CD14-positive monocyte (primary cell): ENCODE measurements at regions of chr17 and their contacts with region 1.

Region 1: GRCh38 chr17:36937966-36938565 is 791 bp downstream of the LHX1 start:
- DNase-seq: no peak
- H3K4me3 ChIP-seq: peak overlapping the region in 1 of 3 experiments; percentile 65
- H3K4me3 Mint-ChIP-seq: peak overlapping the region; percentile 69 to 89
- H3K27ac ChIP-seq: no peak overlapping the region
- H3K27ac Mint-ChIP-seq: no peak overlapping the region
- H3K4me1 ChIP-seq: peaks cover 62 to 73% of the 10 kb centered on the region in 2 donors
- H3K4me1 Mint-ChIP-seq: peaks cover 69% of the 10 kb centered on the region
- H3K27me3 ChIP-seq: peaks cover 92 to 99% of the 10 kb centered on the region in 2 donors
- H3K27me3 Mint-ChIP-seq: peaks cover 91 to 100% (median 99%) of the 10 kb centered on the region in 3 donors
- CTCF ChIP-seq: no peak

Region 2: GRCh38 chr17:35498448-35499178 is 1439.5 kb before region 1 on chr17:
- intact Hi-C with region 1: loop called in 1 of 2 experiments (anchors 10 kb)
- DNase-seq: no peak
- H3K4me3 ChIP-seq: peak overlapping the region in 1 of 3 experiments; percentile 41
- H3K4me3 Mint-ChIP-seq: peak overlapping the region in 1 of 2 donors; percentile 72
- H3K27ac ChIP-seq: no peak overlapping the region
- H3K27ac Mint-ChIP-seq: no peak overlapping the region
- H3K4me1 ChIP-seq: peaks cover 12 to 22% of the 10 kb centered on the region in 2 donors
- H3K4me1 Mint-ChIP-seq: peaks cover 30% of the 10 kb centered on the region
- H3K27me3 ChIP-seq: peaks cover 61 to 69% of the 10 kb centered on the region in 2 donors
- H3K27me3 Mint-ChIP-seq: peaks cover 76 to 87% (median 82%) of the 10 kb centered on the region in 3 donors
- CTCF ChIP-seq: no peak

Region 3: DNA sequence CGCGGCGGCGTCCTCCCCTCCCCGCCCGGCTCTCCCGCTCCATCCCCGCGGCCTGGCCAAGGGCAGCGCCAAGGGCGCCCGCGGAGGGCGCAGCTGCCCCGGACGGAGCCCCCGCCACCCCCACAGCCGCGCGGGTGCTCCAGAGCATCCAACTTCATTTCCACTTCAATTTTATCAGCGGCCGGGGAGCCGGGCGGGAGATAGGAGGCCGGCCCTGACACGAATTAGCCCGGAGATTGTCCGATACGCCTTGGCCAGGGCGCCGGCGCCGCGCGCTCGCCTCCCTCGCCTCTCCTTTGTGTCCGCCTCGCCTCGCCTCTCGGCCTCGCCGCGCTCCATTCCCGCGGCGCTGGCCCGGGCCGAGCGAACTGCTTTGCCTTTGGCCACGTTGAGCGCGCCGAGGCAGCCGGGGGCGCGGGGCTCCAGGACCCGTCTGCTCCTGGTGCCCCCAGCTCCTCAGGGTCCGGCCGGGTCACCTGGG is 129.8 kb before region 1 on chr17:
- intact Hi-C with region 1: no loop called
- DNase-seq: no peak
- H3K4me3 ChIP-seq: no peak overlapping the region
- H3K4me3 Mint-ChIP-seq: peak overlapping the region in 1 of 2 donors; percentile 43
- H3K27ac ChIP-seq: no peak overlapping the region
- H3K27ac Mint-ChIP-seq: no peak overlapping the region
- H3K4me1 ChIP-seq: no peaks in the 10 kb centered on the region
- H3K4me1 Mint-ChIP-seq: no peaks in the 10 kb centered on the region
- H3K27me3 ChIP-seq: peaks cover 30 to 73% of the 10 kb centered on the region in 2 donors
- H3K27me3 Mint-ChIP-seq: peaks cover 64 to 88% (median 76%) of the 10 kb centered on the region in 3 donors
- CTCF ChIP-seq: no peak

Region 4: GRCh38 chr17:36992701-36993100 is 54.6 kb after region 1 on chr17:
- intact Hi-C with region 1: no loop called
- DNase-seq: no peak
- H3K4me3 ChIP-seq: no peak overlapping the region
- H3K4me3 Mint-ChIP-seq: no peak overlapping the region
- H3K27ac ChIP-seq: no peak overlapping the region
- H3K27ac Mint-ChIP-seq: no peak overlapping the region
- H3K4me1 ChIP-seq: no peaks in the 10 kb centered on the region
- H3K4me1 Mint-ChIP-seq: no peaks in the 10 kb centered on the region
- H3K27me3 ChIP-seq: no peaks in the 10 kb centered on the region
- H3K27me3 Mint-ChIP-seq: peaks cover 0 to 2% (median 0%) of the 10 kb centered on the region in 3 donors
- CTCF ChIP-seq: no peak

Region 5: GRCh38 chr17:37147301-37147812 is 209.3 kb after region 1 on chr17:
- intact Hi-C with region 1: no loop called
- DNase-seq: no peak
- H3K4me3 ChIP-seq: no peak overlapping the region
- H3K4me3 Mint-ChIP-seq: no peak overlapping the region
- H3K27ac ChIP-seq: no peak overlapping the region
- H3K27ac Mint-ChIP-seq: peak overlapping the region in 1 of 7 donors; percentile 83
- H3K4me1 ChIP-seq: no peaks in the 10 kb centered on the region
- H3K4me1 Mint-ChIP-seq: peaks cover 2% of the 10 kb centered on the region
- H3K27me3 ChIP-seq: no peaks in the 10 kb centered on the region
- H3K27me3 Mint-ChIP-seq: no peaks in the 10 kb centered on the region
- CTCF ChIP-seq: no peak